SK-N-SH (cell line): ENCODE measurements at regions of chr9 and their contacts with region 1.

Region 1: DNA sequence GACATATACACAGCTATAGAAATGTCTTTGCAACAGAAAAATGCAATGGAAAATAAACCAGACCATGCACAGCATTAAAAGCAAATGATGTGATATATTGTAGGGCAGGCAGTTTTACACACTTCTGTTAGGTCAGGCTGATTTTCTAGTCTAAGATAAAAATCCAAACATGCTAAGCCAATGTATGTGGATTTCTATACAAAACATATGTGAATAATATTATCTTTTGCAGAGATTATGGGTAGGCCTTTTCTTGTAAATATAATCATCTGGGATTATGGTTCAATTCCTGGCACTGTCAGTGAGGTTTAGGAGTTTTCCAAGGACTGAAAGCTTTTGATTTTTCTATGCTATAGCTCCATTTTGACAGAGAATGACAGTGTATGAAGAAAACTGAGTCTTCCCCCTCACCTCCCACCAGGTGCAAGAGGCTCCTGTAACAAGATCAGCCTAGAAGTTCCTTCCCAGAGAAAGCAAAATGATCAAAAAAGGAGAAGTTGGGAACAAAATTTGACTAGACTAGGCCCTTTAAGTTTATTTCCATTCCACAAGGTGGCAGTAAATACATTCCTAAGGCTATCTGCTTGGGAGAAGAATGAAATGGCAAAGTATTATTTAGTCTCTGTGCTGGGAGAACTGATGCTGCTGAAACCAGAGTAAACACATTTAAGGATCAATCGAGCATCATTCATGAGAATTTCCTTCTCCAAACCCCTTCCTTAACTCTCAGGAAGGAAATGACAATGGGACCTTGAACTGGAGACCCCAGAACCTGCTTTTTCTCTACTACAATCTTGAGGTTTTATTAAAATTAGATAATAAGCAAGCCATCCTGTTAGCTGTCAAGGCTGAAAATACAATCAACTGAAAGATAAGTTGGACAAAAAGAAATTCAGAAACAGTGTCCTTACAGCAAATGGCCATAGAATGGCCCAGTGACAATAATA is 133.0 kb upstream of the TUT7 start:
- DNase-seq: peak; percentile 59
- H3K4me3 ChIP-seq: no peak overlapping the region; a peak in 1 of 4 replicates
- H3K27ac ChIP-seq: peak overlapping the region in 1 of 2 experiments; percentile 23; a peak in 1 of 4 replicates
- H3K4me1 ChIP-seq: no peaks in the 10 kb centered on the region; a peak in 2 of 4 replicates
- H3K27me3 ChIP-seq: no peaks in the 10 kb centered on the region
- CTCF ChIP-seq: peak; percentile 76
- EP300 ChIP-seq: no peak
- RAD21 ChIP-seq: peak; percentile 95

Region 2: GRCh38 chr9:86507212-86507630 is 20.1 kb after region 1 on chr9:
- CTCF ChIA-PET with region 1: interaction called, 11 read pairs
- POLR2A ChIA-PET with region 1: no interaction called
- DNase-seq: no peak
- H3K4me3 ChIP-seq: no peak overlapping the region
- H3K27ac ChIP-seq: no peak overlapping the region
- H3K4me1 ChIP-seq: peaks cover 0 to 3% of the 10 kb centered on the region in 2 experiments; a peak in 2 of 4 replicates
- H3K27me3 ChIP-seq: no peaks in the 10 kb centered on the region
- CTCF ChIP-seq: no peak
- EP300 ChIP-seq: no peak
- RAD21 ChIP-seq: no peak

Region 3: GRCh38 chr9:86557918-86558317 is 70.8 kb after region 1 on chr9:
- CTCF ChIA-PET with region 1: no interaction called
- POLR2A ChIA-PET with region 1: no interaction called
- DNase-seq: no peak
- H3K4me3 ChIP-seq: no peak overlapping the region
- H3K27ac ChIP-seq: no peak overlapping the region
- H3K4me1 ChIP-seq: peaks cover 2 to 12% of the 10 kb centered on the region in 2 experiments; a peak in 3 of 4 replicates
- H3K27me3 ChIP-seq: no peaks in the 10 kb centered on the region
- CTCF ChIP-seq: no peak
- EP300 ChIP-seq: no peak
- RAD21 ChIP-seq: no peak

Region 4: GRCh38 chr9:86676396-86676795 is 189.2 kb after region 1 on chr9:
- CTCF ChIA-PET with region 1: no interaction called
- POLR2A ChIA-PET with region 1: no interaction called
- DNase-seq: no peak
- H3K4me3 ChIP-seq: no peak overlapping the region
- H3K27ac ChIP-seq: no peak overlapping the region
- H3K4me1 ChIP-seq: peaks cover 2 to 6% of the 10 kb centered on the region in 2 experiments; a peak in 1 of 4 replicates
- H3K27me3 ChIP-seq: no peaks in the 10 kb centered on the region
- CTCF ChIP-seq: no peak
- EP300 ChIP-seq: no peak
- RAD21 ChIP-seq: no peak

Region 5: GRCh38 chr9:86948074-86948929 is 461.1 kb after region 1 on chr9:
- CTCF ChIA-PET with region 1: interaction called, 32 read pairs
- POLR2A ChIA-PET with region 1: interaction called, 3 read pairs
- DNase-seq: peak; percentile 74
- H3K4me3 ChIP-seq: peak overlapping the region; percentile 48 to 95
- H3K27ac ChIP-seq: peak overlapping the region; percentile 85 to 93
- H3K4me1 ChIP-seq: peaks cover 0 to 12% of the 10 kb centered on the region in 2 experiments; a peak in 1 of 4 replicates
- H3K27me3 ChIP-seq: no peaks in the 10 kb centered on the region
- CTCF ChIP-seq: peak; percentile 79
- EP300 ChIP-seq: peak; percentile 41 to 62; a peak in 1 of 4 replicates
- RAD21 ChIP-seq: peak; percentile 75

Region 6: DNA sequence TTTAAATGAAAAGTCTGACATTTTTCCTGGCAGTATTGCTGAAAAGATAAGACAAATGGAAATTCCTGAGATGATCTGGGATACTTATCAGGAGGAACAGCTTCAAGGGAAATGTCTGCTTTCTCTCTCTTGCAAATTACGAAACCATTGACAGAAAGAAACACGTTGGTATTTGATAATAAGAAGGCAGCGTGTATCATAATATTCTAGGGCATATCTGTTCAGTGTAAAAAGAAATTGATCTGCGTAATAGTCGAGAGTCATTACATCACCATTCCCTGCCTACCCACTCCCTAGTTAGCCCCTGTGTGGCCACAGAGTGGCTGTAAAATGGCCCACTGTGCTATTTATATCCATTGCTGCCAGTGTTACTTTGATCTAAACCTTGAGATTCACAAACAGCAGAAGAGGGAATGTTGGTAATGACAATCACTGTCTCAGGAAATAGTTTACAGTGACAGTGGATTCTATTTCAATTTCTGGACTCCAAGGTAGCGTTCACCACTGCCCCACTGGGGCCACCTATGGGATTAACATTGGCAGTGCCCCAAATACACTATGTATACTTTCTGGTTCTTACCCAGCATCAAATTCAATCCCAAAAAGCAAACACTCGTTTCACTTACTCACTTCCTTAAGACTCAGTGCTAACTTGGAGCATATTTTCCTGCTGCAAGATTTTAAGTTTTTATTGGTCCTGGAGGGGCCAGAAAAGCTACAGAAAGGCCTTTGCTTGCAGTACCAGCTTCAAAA is 593.5 kb after region 1 on chr9:
- CTCF ChIA-PET with region 1: interaction called, 14 read pairs
- POLR2A ChIA-PET with region 1: no interaction called
- DNase-seq: peak; percentile 67
- H3K4me3 ChIP-seq: no peak overlapping the region
- H3K27ac ChIP-seq: peak overlapping the region; percentile 31 to 89; a peak in 3 of 4 replicates
- H3K4me1 ChIP-seq: peaks cover 6 to 7% of the 10 kb centered on the region in 2 experiments; a peak in 3 of 4 replicates
- H3K27me3 ChIP-seq: no peaks in the 10 kb centered on the region
- CTCF ChIP-seq: peak; percentile 50
- EP300 ChIP-seq: peak; percentile 93 to 95
- RAD21 ChIP-seq: peak; percentile 76